ENCODE measurements at regions of chr6 and their contacts with region 1.

Region 1: GRCh38 chr6:137076277-137077068 is 31.7 kb upstream of the IL20RA start:
- DNase-seq: peak; percentile 79
- ATAC-seq: peak; percentile 100
- H3K4me3 Mint-ChIP-seq: no peak overlapping the region
- H3K27ac Mint-ChIP-seq: no peak overlapping the region
- H3K4me1 Mint-ChIP-seq: peaks cover 8% of the 10 kb centered on the region; the same call in 1 of the 2 replicates
- H3K27me3 Mint-ChIP-seq: no peaks in the 10 kb centered on the region; the same call in 1 of the 2 replicates
- CTCF ChIP-seq: peak; percentile 46

Region 2: DNA sequence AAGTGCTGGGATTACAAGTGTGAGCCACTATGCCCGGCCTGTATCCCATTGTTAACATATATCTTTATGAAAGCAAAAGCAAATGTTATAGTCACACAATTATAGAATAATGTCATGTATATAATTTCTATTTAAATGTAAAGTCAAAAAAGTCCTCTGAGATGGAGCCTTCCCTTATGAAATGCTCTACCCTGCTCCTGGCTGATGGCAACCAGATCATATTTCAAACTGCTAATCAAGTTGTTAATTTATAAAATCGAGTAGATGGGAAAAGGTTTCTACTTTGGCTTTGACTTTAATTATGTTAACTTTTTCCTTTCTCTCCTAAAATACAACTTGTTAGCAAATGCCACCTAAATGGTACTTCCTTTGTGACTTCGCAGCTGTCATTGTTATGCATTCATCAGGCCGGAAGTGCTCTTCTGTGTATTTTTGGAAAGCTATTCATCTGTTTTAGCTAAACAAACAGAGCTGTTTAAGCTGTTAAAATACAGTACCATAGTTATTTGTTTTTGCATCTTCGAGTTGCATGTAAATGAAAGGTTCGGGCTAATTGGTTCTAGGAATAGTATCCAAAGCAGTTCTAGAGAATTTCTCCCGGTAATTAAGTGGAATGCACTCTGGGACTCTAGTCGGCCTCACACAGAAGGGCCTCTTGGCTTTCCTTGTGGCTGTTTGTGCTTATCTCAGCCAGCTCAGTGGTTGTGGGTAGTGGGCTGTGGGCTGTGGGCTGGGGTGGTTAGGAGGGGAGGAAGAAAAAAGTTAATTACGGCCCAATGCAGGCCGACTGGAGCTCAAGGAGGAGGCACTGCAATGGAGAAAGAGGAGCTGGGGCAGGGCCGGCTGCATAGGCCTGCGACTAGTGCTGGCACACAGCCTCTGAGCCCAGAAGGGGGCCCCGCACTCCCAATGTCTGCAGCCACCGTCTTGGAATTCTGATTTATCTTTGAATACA is 119.6 kb before region 1 on chr6:
- CTCF ChIA-PET with region 1: interaction called, 16 read pairs
- POLR2A ChIA-PET with region 1: no interaction called
- DNase-seq: peak; percentile 66
- ATAC-seq: peak; percentile 70
- H3K4me3 Mint-ChIP-seq: peak overlapping the region; percentile 38
- H3K27ac Mint-ChIP-seq: peak overlapping the region; percentile 99
- H3K4me1 Mint-ChIP-seq: peaks cover 72% of the 10 kb centered on the region
- H3K27me3 Mint-ChIP-seq: no peaks in the 10 kb centered on the region
- CTCF ChIP-seq: no peak

Region 3: GRCh38 chr6:137058037-137058436 is 18.4 kb before region 1 on chr6:
- CTCF ChIA-PET with region 1: no interaction called
- POLR2A ChIA-PET with region 1: no interaction called
- DNase-seq: no peak
- ATAC-seq: no peak
- H3K4me3 Mint-ChIP-seq: no peak overlapping the region
- H3K27ac Mint-ChIP-seq: no peak overlapping the region
- H3K4me1 Mint-ChIP-seq: peaks cover 8% of the 10 kb centered on the region; the same call in 1 of the 2 replicates
- H3K27me3 Mint-ChIP-seq: no peaks in the 10 kb centered on the region
- CTCF ChIP-seq: no peak

Region 4: DNA sequence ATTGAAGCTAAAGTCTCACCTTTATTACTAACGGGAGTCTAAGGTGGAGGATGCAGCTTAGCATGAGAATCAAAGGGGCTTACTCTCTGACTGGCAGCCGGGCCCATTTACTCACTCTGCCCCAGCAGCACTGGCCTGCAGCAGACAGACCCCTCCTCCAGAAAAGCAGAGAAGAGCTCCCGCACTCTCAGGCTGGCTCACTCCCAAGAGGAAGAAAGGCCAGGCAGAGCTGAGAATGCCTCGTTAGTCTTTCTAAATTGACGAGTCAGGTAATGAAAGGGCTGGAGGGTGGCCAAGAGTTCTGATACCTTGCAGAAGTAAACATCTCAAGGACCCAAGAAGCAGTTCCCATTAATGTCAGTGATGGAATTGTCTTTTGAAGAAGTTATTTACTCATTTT is 12.8 kb after region 1 on chr6:
- CTCF ChIA-PET with region 1: interaction called, 25 read pairs
- POLR2A ChIA-PET with region 1: no interaction called
- DNase-seq: no peak
- ATAC-seq: peak; percentile 68; the same call in 1 of the 2 replicates
- H3K4me3 Mint-ChIP-seq: no peak overlapping the region
- H3K27ac Mint-ChIP-seq: no peak overlapping the region
- H3K4me1 Mint-ChIP-seq: no peaks in the 10 kb centered on the region
- H3K27me3 Mint-ChIP-seq: no peaks in the 10 kb centered on the region; the same call in 1 of the 2 replicates
- CTCF ChIP-seq: no peak

Region 5: GRCh38 chr6:137094411-137095008 is 18.0 kb after region 1 on chr6:
- CTCF ChIA-PET with region 1: interaction called, 25 read pairs
- POLR2A ChIA-PET with region 1: no interaction called
- DNase-seq: peak; percentile 55
- ATAC-seq: peak; percentile 72
- H3K4me3 Mint-ChIP-seq: no peak overlapping the region
- H3K27ac Mint-ChIP-seq: no peak overlapping the region
- H3K4me1 Mint-ChIP-seq: peaks cover 13% of the 10 kb centered on the region
- H3K27me3 Mint-ChIP-seq: no peaks in the 10 kb centered on the region; the same call in 1 of the 2 replicates
- CTCF ChIP-seq: peak; percentile 45; the same call in 1 of the 2 replicates

Region 6: GRCh38 chr6:137133122-137133521 is 56.6 kb after region 1 on chr6:
- CTCF ChIA-PET with region 1: interaction called, 15 read pairs
- POLR2A ChIA-PET with region 1: no interaction called
- DNase-seq: peak; percentile 29
- ATAC-seq: peak; percentile 95
- H3K4me3 Mint-ChIP-seq: no peak overlapping the region
- H3K27ac Mint-ChIP-seq: no peak overlapping the region
- H3K4me1 Mint-ChIP-seq: no peaks in the 10 kb centered on the region
- H3K27me3 Mint-ChIP-seq: no peaks in the 10 kb centered on the region
- CTCF ChIP-seq: no peak

Region 7: GRCh38 chr6:137218917-137219663 is 142.6 kb after region 1 on chr6 and contains the start of gene IFNGR1:
- CTCF ChIA-PET with region 1: no interaction called
- POLR2A ChIA-PET with region 1: no interaction called
- DNase-seq: peak; percentile 96
- ATAC-seq: peak; percentile 96
- H3K4me3 Mint-ChIP-seq: peak within 1 kb of the TSS; percentile 95
- H3K27ac Mint-ChIP-seq: peak within 1 kb of the TSS; percentile 96
- H3K4me1 Mint-ChIP-seq: peaks cover 29% of the 10 kb centered on the region
- H3K27me3 Mint-ChIP-seq: no peaks in the 10 kb centered on the region
- CTCF ChIP-seq: no peak
- total RNA-seq, gene IFNGR1: 15.7 to 17.6 TPM (median 17.5 TPM) in 3 replicates

Measured in WTC11 (cell line).